GM10248 (cell line): ENCODE measurements at regions of chr6 and their contacts with region 1.

Region 1: DNA sequence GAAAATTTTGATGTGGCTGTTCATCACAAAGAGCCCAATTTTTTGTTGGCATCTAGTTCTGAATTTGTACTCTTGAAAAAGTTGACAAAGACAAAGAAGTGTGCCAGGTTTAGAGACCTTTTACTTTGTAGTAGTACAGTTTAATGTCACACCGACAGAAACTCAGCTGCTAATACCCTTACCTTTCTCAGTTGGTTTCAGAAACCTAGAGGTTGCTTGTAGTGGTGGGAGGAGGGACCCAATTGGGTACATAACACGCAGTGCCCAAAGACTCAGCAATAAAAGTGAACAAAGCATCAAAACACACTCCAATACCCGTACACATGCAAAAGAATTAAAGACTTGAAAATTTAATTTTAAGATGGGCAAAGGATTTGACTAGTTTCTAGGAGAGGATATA is 203.7 kb downstream of the CDKAL1 start:
- DNase-seq: no peak
- CTCF ChIP-seq: no peak

Region 2: DNA sequence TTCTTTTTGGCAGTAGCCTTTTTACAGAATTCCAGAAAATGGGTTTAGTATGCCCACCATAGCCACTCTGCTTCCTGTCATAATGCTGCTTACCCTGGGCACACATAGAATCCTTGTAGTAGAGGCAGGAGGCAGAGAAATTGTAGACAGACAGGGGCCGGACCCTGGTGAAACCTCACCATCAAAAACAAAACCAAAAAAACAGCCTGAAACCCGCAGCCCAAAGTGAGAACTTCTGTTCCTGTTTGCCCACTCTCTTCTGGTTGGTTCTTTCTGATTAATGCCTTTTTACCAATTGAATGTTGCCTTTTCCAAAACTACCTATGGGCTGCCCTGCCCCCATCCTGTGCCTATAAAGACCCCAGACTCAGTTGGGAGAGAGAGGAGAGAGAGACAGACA is 15.5 kb before region 1 on chr6:
- CTCF ChIA-PET with region 1: interaction called, 10 read pairs
- POLR2A ChIA-PET with region 1: no interaction called
- DNase-seq: no peak
- CTCF ChIP-seq: no peak